ENCODE measurements at regions of chr10 and their contacts with region 1.

Region 1: GRCh38 chr10:112434988-112435619 is 11.6 kb downstream of the ZDHHC6 start:
- DNase-seq: peak; percentile 52
- ATAC-seq: no peak
- H3K4me3 ChIP-seq: no peak overlapping the region
- H3K27ac ChIP-seq: no peak overlapping the region
- H3K4me1 ChIP-seq: peaks cover 2% of the 10 kb centered on the region
- H3K27me3 ChIP-seq: no peaks in the 10 kb centered on the region
- CTCF ChIP-seq: peak; percentile 59
- EP300 ChIP-seq: no peak
- POLR2A ChIP-seq: no peak
- RAD21 ChIP-seq: peak; percentile 44; the same call in 1 of the 2 replicates

Region 2: DNA sequence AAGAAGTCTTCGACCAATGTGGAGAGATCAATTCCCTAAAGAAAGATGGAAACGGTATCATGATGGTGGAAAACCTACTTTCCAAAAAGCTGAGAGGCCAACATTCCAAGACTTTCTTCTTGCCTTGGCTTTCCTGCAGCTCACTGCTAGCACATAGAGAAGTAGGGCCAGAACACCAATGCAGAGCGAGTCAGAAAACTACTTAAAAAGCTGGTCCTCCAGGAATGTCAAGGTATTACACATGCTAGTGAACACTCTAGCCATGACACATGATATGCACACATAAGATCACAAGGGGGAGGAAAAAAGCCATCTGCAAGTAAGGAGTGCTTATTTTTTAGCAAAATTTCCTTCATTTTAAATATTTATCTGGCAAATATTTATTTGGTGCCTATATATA is 274.3 kb before region 1 on chr10:
- CTCF ChIA-PET with region 1: no interaction called
- POLR2A ChIA-PET with region 1: no interaction called
- in situ Hi-C with region 1: no loop called
- intact Hi-C with region 1: loop called (anchors 5 kb)
- DNase-seq: no peak
- ATAC-seq: peak; percentile 25; the same call in 1 of the 3 replicates
- H3K4me3 ChIP-seq: no peak overlapping the region
- H3K27ac ChIP-seq: no peak overlapping the region
- H3K4me1 ChIP-seq: no peaks in the 10 kb centered on the region
- H3K27me3 ChIP-seq: no peaks in the 10 kb centered on the region
- CTCF ChIP-seq: no peak
- EP300 ChIP-seq: no peak
- POLR2A ChIP-seq: no peak
- RAD21 ChIP-seq: no peak

Measured in HepG2 (cell line).